Thyroid gland (tissue), 4 donors: ENCODE measurements at regions of chr5 and their contacts with region 1.

Region 1: DNA sequence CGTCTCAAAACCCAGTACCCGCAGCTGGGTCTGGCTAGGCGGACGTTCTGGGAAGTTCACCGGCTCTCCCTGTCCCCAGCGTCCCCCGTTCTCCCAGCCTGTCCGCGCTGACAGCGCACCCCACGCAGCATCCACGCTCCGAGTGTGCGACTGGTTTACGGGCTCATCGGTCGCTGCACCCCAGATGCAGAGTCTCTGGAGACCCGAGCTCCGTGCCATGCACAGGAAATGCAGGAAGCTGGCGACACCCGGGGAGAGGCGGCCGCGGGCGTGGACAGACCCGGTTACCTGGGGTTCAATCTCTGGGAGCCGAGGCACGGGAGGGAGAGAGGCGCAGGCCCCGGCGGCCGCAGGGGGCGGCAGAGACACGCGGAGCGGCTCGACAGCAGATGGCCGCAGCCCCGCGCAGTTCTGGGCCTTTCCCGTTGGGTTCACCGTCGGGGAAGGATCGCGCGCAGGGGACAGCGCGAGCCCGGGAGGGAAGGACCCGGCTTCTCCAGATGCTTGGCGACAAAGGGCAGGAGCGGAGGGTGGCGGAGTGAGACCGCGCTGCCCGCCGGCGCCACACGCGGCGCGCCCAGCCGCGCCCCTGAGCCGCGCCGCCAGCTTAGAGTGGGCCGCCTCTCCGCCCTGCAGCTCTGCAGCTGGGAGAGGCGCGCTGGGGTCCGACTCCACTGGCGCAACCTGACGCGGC is 558 bp downstream of the SHROOM1 start:
- DNase-seq: peak; percentile 72 to 77
- H3K4me3 ChIP-seq: peak overlapping the region; percentile 63 to 84 (median 67)
- H3K27ac ChIP-seq: peak overlapping the region; percentile 11 to 84 (median 78)
- H3K4me1 ChIP-seq: peaks cover 10 to 16% of the 10 kb centered on the region in 2 donors
- H3K27me3 ChIP-seq: no peaks in the 10 kb centered on the region
- CTCF ChIP-seq: peak; percentile 49 to 92 (median 76)
- POLR2A ChIP-seq: no peak

Region 2: DNA sequence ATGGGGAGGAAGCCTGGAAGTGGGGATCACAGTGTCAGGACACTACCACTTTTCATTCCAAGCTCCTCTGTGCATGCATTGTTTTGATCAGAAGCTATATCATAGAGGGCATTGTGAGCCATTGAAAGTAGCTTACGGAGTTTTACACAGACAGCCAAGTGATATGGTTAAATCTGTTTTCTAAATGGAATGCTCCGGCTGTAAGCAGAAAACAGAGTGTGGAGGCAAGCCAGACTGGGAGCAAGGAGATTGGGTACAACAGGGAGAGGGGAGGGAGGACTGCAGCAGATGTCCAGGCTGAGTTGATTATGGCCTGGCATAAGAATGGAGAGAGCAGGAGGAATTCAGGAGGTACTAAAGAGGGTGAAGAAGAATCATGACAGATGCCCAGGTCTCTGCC is 32.2 kb before region 1 on chr5:
- intact Hi-C with region 1: no loop called
- DNase-seq: no peak
- H3K4me3 ChIP-seq: no peak overlapping the region
- H3K27ac ChIP-seq: no peak overlapping the region
- H3K4me1 ChIP-seq: no peaks in the 10 kb centered on the region
- H3K27me3 ChIP-seq: no peaks in the 10 kb centered on the region
- CTCF ChIP-seq: no peak
- POLR2A ChIP-seq: no peak

Region 3: DNA sequence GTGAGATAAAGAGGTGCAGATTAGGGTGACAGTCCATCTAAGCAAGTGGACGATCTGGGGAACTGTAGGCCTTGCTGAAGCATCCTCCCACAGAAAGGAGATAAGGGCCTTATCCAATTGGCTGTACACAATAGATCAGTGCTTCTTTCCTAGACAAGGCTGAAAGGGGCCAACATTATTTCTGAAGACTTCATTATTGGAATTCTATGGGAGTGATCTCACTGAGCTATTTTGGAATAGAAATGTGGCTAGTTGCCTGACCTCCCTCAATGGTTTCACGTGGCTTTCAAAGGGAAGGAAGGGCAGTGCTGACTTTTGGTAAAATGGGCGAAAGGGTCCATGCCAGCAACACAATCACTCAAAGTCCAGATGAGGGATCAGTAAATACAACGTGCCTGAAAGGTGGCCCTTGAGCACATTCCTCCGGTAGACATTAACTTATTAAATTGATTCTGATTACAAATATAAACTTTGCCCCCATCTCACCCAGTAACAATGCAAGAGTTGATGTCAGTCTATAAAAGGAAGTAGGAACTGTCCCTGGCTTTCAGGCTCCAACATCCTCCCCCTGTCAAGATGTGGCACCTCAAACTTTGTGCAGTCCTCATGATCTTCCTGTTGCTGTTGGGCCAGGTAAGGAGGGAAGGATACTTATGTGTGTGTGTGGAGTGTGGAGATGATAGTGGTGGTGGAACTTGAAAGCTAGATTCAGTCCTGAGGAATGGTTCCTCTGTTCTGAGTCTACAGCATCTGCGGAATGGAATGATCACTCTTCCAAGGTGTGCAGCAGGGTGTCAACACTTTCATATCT is 43.4 kb after region 1 on chr5 and contains the start of gene LEAP2:
- intact Hi-C with region 1: loop called (anchors 5 kb)
- DNase-seq: no peak
- H3K4me3 ChIP-seq: no peak within 1 kb of the TSS
- H3K27ac ChIP-seq: no peak within 1 kb of the TSS
- H3K4me1 ChIP-seq: peaks cover 0 to 8% of the 10 kb centered on the region in 2 donors
- H3K27me3 ChIP-seq: no peaks in the 10 kb centered on the region
- CTCF ChIP-seq: no peak
- POLR2A ChIP-seq: no peak
- total RNA-seq, gene LEAP2: 1.5 to 4.8 (median 2.9) TPM

Region 4: DNA sequence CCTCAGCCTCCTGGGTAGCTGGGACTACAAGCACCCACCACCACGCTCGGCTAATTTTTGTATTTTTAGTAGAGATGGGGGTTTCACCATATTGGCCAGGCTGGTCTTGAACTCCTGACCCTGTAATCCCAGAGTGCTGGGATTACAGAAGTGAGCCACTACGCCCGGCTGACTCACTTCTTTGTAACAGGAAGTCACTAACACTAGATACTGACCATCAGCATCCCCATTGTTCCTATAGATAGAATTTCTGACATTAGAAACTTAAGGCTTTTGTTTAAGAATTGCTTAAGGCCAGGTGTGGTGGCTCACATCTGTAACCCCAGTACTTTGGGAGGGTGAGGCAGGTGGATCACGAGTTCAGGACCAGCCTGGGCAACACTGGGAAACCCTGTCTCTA is 85.8 kb after region 1 on chr5:
- intact Hi-C with region 1: no loop called
- DNase-seq: no peak
- H3K4me3 ChIP-seq: no peak overlapping the region
- H3K27ac ChIP-seq: no peak overlapping the region
- H3K4me1 ChIP-seq: no peaks in the 10 kb centered on the region
- H3K27me3 ChIP-seq: no peaks in the 10 kb centered on the region
- CTCF ChIP-seq: no peak
- POLR2A ChIP-seq: no peak